ENCODE measurements at regions of chr1 and their contacts with region 1.

Region 1: GRCh38 chr1:42173155-42173933 is 8.8 kb upstream of the GUCA2A start:
- DNase-seq: no peak
- H3K4me3 ChIP-seq: no peak overlapping the region
- CTCF ChIP-seq: peak; percentile 93

Region 2: GRCh38 chr1:42146626-42147320 is 26.6 kb before region 1 on chr1:
- CTCF ChIA-PET with region 1: interaction called, 97 read pairs
- POLR2A ChIA-PET with region 1: no interaction called
- DNase-seq: no peak
- H3K4me3 ChIP-seq: no peak overlapping the region
- CTCF ChIP-seq: peak; percentile 80

Region 3: GRCh38 chr1:42195841-42196240 is 22.5 kb after region 1 on chr1:
- CTCF ChIA-PET with region 1: interaction called, 20 read pairs
- POLR2A ChIA-PET with region 1: no interaction called
- DNase-seq: no peak
- H3K4me3 ChIP-seq: no peak overlapping the region
- CTCF ChIP-seq: no peak

Region 4: GRCh38 chr1:42223036-42223435 is 49.7 kb after region 1 on chr1:
- CTCF ChIA-PET with region 1: interaction called, 12 read pairs
- POLR2A ChIA-PET with region 1: no interaction called
- DNase-seq: no peak
- H3K4me3 ChIP-seq: no peak overlapping the region
- CTCF ChIP-seq: no peak

Region 5: GRCh38 chr1:42328047-42328625 is 154.8 kb after region 1 on chr1:
- CTCF ChIA-PET with region 1: interaction called, 26 read pairs
- POLR2A ChIA-PET with region 1: no interaction called
- DNase-seq: no peak
- H3K4me3 ChIP-seq: no peak overlapping the region
- CTCF ChIP-seq: no peak